ENCODE measurements at regions of chr5 and their contacts with region 1.

Region 1: GRCh38 chr5:91499943-91500531 is 116.9 kb upstream of the ARRDC3 start:
- DNase-seq: peak in 1 of 2 experiments; percentile 36
- H3K4me3 ChIP-seq: no peak overlapping the region
- H3K4me3 Mint-ChIP-seq: no peak overlapping the region
- H3K27ac Mint-ChIP-seq: no peak overlapping the region
- H3K4me1 ChIP-seq: no peaks in the 10 kb centered on the region
- H3K4me1 Mint-ChIP-seq: no peaks in the 10 kb centered on the region
- H3K27me3 ChIP-seq: peaks cover 2% of the 10 kb centered on the region; the same call in 1 of the 2 replicates
- H3K27me3 Mint-ChIP-seq: peaks cover 6% of the 10 kb centered on the region
- CTCF ChIP-seq: peak; percentile 43 to 60

Region 2: DNA sequence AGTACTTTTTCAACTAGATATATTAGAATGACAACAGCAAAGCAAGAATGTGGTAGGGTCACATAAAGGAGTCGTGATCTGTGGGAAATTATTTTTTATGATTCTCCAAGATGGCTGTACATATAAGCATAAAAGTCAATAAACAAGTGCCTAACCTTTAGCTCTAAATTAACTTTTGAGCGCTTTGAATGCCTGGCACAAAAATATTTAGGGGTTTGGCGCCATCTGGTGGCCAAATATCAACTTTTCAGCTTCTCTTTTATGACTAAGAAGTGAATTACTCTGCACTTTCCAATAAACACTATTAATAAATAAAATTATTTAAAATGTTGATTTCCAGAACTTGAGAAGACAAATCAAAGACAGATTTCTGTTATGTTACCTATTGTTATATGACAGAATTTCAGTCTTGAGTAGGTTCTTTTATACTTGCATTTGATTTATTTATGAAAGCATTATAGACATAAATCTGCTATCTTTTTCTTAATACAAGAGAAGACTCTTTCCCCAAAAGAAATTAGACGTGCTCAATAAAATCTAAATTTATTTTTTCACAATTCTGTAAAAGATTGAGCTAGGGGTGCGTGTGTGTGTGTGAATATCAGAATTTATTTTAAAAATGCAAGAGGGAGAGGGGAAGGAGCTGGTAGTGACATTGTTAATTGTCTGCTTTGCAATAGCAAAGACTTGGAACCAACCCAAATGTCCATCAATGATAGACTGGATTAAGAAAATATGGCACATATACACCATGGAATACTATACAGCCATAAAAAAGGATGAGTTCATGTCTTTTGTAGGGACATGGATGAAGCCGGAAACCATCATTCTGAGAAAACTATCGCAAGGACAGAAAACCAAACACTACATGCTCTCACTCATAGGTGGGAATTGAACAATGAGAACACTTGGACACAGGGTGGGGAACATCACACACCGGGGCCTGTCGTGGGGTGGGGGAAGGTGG is 80.2 kb before region 1 on chr5:
- CTCF ChIA-PET with region 1: no interaction called
- POLR2A ChIA-PET with region 1: no interaction called
- intact Hi-C with region 1: no loop called
- DNase-seq: peak; percentile 43 to 54
- H3K4me3 ChIP-seq: no peak overlapping the region
- H3K4me3 Mint-ChIP-seq: no peak overlapping the region
- H3K27ac Mint-ChIP-seq: no peak overlapping the region
- H3K4me1 ChIP-seq: no peaks in the 10 kb centered on the region
- H3K4me1 Mint-ChIP-seq: peaks cover 7% of the 10 kb centered on the region
- H3K27me3 ChIP-seq: no peaks in the 10 kb centered on the region
- H3K27me3 Mint-ChIP-seq: no peaks in the 10 kb centered on the region
- CTCF ChIP-seq: peak; percentile 58 to 76

Region 3: DNA sequence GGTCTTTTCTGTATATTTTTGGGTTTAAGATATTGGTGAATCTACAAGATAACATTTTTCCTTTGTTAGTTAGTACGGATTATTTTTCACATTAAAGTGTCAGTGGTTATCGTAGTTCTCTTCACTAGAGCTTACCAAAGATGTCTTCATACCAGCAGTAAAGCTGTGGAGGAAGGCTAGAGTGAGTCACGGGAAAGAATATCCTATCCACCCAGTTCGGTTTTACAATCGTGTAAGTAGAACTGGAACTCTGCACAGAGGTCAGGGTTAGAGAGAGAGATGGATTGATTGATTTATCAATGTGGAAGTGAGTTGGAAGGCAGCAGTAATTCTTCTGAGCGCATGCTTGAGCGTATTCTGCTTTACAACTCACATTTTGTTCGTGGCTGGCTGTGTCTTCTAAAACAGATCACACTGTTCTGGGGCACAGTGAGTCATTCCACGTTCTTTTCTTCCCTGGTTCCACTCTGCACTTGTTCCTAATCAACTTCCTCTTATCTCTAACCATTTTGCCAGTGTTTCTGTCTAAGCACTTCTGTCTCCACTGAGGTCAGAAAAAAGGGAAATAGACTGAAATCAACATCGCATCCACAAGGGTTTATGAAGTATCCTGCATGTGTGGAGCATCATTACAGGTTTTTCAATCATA is 30.4 kb before region 1 on chr5:
- CTCF ChIA-PET with region 1: no interaction called
- POLR2A ChIA-PET with region 1: no interaction called
- intact Hi-C with region 1: no loop called
- DNase-seq: no peak
- H3K4me3 ChIP-seq: no peak overlapping the region
- H3K4me3 Mint-ChIP-seq: no peak overlapping the region
- H3K27ac Mint-ChIP-seq: no peak overlapping the region
- H3K4me1 ChIP-seq: no peaks in the 10 kb centered on the region
- H3K4me1 Mint-ChIP-seq: no peaks in the 10 kb centered on the region
- H3K27me3 ChIP-seq: no peaks in the 10 kb centered on the region; the same call in 1 of the 2 replicates
- H3K27me3 Mint-ChIP-seq: peaks cover 7% of the 10 kb centered on the region
- CTCF ChIP-seq: no peak

Region 4: DNA sequence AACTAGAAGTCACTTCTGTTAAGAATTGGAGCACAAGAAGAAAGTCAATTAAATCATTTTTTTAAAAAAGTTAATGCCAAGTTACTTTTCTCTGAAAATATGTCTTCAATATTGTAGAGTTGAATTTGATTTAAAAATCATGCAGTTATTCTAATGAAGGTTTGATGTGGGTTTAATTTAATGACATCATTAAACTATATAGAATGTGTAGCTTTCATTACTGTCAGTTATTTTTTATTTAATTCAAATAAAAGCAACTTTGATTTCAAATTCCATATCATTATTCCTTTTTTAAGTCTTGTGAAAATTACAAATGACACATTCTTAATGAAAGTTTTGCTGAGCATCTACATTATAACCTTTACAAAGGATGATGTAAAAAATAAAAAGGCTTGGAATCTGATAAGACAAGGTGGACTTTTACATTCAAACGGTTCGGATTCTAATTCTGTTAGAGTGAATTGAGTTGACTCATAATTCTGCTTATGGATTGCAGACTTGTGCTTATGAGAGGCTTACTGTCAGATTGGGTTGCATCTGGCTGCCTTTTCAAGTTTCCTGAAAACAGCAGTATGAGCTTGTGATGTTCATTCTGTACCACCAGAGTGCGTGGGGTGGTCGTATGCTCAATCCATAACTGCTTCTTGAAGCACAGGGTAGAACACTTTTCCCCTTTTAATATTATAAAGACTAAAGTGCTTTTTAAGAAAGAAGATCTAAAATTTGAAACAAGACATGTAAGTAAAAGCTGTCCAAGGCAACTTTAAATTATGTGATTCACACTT is 136.1 kb after region 1 on chr5:
- CTCF ChIA-PET with region 1: no interaction called
- POLR2A ChIA-PET with region 1: no interaction called
- intact Hi-C with region 1: loop called (anchors 5 kb)
- DNase-seq: no peak
- H3K4me3 ChIP-seq: no peak overlapping the region
- H3K4me3 Mint-ChIP-seq: no peak overlapping the region
- H3K27ac Mint-ChIP-seq: no peak overlapping the region
- H3K4me1 ChIP-seq: no peaks in the 10 kb centered on the region
- H3K4me1 Mint-ChIP-seq: no peaks in the 10 kb centered on the region
- H3K27me3 ChIP-seq: no peaks in the 10 kb centered on the region
- H3K27me3 Mint-ChIP-seq: no peaks in the 10 kb centered on the region
- CTCF ChIP-seq: no peak

Region 5: DNA sequence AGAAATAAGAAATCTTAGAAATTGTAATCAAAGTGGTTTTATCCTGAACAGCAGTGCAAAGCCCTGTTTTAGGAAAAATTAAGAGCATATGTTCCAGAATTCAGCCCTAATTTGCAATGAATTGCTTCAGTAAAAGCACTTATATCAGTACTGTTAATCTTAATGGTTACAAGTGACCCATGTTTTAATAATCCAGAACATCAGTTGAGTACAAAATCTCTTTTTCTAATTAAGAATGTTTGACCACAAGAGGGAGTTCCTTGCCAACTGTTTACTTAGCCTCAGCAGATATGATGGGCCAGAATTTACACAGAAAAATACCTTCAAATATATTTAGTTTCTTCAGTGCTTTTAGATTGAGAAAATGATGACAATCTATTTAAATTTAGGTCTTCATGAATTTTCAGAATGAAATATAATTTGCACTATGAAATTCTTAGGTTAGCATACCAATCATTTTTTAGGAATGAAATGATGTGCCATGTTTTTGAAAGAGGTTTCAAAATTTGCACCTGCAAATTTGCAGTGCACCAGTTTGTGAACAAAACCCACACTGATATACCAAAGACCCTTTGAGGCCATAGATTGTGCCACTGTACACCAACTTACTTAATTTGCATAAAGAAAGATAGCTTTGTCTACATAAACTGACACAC is 809.4 kb after region 1 on chr5:
- CTCF ChIA-PET with region 1: no interaction called
- POLR2A ChIA-PET with region 1: no interaction called
- intact Hi-C with region 1: loop called (anchors 10 kb)
- DNase-seq: no peak
- H3K4me3 ChIP-seq: no peak overlapping the region
- H3K4me3 Mint-ChIP-seq: no peak overlapping the region
- H3K27ac Mint-ChIP-seq: no peak overlapping the region
- H3K4me1 ChIP-seq: no peaks in the 10 kb centered on the region
- H3K4me1 Mint-ChIP-seq: no peaks in the 10 kb centered on the region
- H3K27me3 ChIP-seq: no peaks in the 10 kb centered on the region
- H3K27me3 Mint-ChIP-seq: no peaks in the 10 kb centered on the region
- CTCF ChIP-seq: peak; percentile 59 to 68